ENCODE measurements at regions of chr15 and their contacts with region 1.

Region 1: GRCh38 chr15:83585601-83586335 is 68.2 kb upstream of the ADAMTSL3 start:
- DNase-seq: no peak
- CTCF ChIP-seq: no peak

Region 2: GRCh38 chr15:83571820-83572707 is 13.7 kb before region 1 on chr15:
- CTCF ChIA-PET with region 1: interaction called, 15 read pairs
- POLR2A ChIA-PET with region 1: no interaction called
- DNase-seq: peak; percentile 34
- CTCF ChIP-seq: peak; percentile 32

Region 3: GRCh38 chr15:83764201-83764838 is 178.6 kb after region 1 on chr15:
- CTCF ChIA-PET with region 1: no interaction called
- POLR2A ChIA-PET with region 1: no interaction called
- DNase-seq: no peak
- CTCF ChIP-seq: no peak